ENCODE measurements at regions of chr11 and their contacts with region 1.

Region 1: GRCh38 chr11:61871158-61871597 is 20.2 kb downstream of the FADS3 start:
- DNase-seq: peak; percentile 73
- ATAC-seq: peak; percentile 95
- H3K4me3 Mint-ChIP-seq: peak overlapping the region; percentile 61
- H3K27ac Mint-ChIP-seq: no peak overlapping the region
- H3K4me1 Mint-ChIP-seq: peaks cover 5% of the 10 kb centered on the region
- H3K27me3 Mint-ChIP-seq: peaks cover 4% of the 10 kb centered on the region

Region 2: DNA sequence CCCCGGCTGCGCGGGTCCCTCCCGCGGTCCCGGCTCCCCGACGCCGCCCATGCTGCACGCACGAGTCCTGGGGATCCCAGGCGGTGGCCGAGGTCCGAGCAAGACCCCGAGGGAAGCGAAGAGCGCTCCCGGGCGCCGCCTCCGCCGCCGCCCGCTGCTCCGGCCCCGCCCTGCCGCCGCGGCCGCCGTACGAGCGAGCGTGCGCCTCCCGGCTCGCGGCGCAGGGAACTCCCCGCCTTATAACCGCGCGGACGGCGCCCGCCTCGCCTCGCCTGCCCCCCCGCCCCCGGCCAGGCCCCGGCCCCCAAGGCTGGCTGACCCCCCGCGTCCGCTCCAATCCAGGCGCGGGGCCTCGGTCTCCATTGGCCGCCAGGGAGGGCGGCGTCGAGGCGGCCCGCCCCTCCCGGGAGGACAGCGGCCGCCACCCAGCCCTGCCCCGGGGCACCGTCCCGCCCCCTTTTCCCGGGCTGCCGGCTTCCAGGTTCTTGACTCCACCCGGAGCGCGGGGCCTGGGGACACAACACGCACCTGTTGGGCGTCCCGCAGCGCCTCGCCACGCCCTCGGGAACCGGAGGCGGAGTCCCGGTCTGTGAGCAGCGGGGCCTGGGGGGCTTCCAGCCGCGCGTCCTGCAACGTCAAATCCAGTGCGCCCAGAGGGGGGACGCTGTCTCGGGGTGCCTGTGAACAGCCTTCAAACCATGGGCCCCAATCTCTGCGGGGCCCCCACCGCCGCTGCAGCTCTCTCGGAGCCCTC is 20.3 kb after region 1 on chr11 and contains the start of gene FADS3:
- CTCF ChIA-PET with region 1: interaction called, 40 read pairs
- DNase-seq: peak; percentile 66
- ATAC-seq: peak; percentile 87
- H3K4me3 Mint-ChIP-seq: peak within 1 kb of the TSS; percentile 77
- H3K27ac Mint-ChIP-seq: no peak within 1 kb of the TSS
- H3K4me1 Mint-ChIP-seq: peaks cover 3% of the 10 kb centered on the region
- H3K27me3 Mint-ChIP-seq: peaks cover 9% of the 10 kb centered on the region
- total RNA-seq, gene FADS3: 2.6 to 7.7 TPM

Region 3: GRCh38 chr11:61947486-61948210 is 76.5 kb after region 1 on chr11:
- CTCF ChIA-PET with region 1: interaction called, 32 read pairs
- DNase-seq: peak; percentile 77
- ATAC-seq: peak; percentile 84
- H3K4me3 Mint-ChIP-seq: no peak overlapping the region
- H3K27ac Mint-ChIP-seq: no peak overlapping the region
- H3K4me1 Mint-ChIP-seq: no peaks in the 10 kb centered on the region
- H3K27me3 Mint-ChIP-seq: peaks cover 4% of the 10 kb centered on the region

Measured in activated CD8-positive, alpha-beta memory T cell treated with anti-CD3 and anti-CD28 coated beads, Interleukin-2, amount 10 ng/mL, durations not matched to agents 7 days and 5 days (primary cell).